ENCODE measurements at regions of chr10 and their contacts with region 1.

Region 1: GRCh38 chr10:99248824-99249223 is 13.2 kb upstream of the HPSE2 start:
- DNase-seq: no peak
- ATAC-seq: no peak
- H3K4me3 ChIP-seq: no peak overlapping the region
- H3K27ac ChIP-seq: no peak overlapping the region
- H3K4me1 ChIP-seq: no peaks in the 10 kb centered on the region
- H3K27me3 ChIP-seq: no peaks in the 10 kb centered on the region
- CTCF ChIP-seq: no peak

Region 2: GRCh38 chr10:98467506-98468346 is 781.1 kb before region 1 on chr10:
- intact Hi-C with region 1: loop called (anchors 10 kb)
- DNase-seq: peak; percentile 81
- ATAC-seq: peak; percentile 99
- H3K4me3 ChIP-seq: peak overlapping the region; percentile 55
- H3K27ac ChIP-seq: no peak overlapping the region
- H3K4me1 ChIP-seq: peaks cover 7% of the 10 kb centered on the region
- H3K27me3 ChIP-seq: no peaks in the 10 kb centered on the region
- CTCF ChIP-seq: peak; percentile 84

Region 3: GRCh38 chr10:99125879-99126278 is 122.9 kb before region 1 on chr10:
- intact Hi-C with region 1: no loop called
- DNase-seq: no peak
- ATAC-seq: no peak
- H3K4me3 ChIP-seq: no peak overlapping the region
- H3K27ac ChIP-seq: no peak overlapping the region
- H3K4me1 ChIP-seq: no peaks in the 10 kb centered on the region
- H3K27me3 ChIP-seq: no peaks in the 10 kb centered on the region
- CTCF ChIP-seq: no peak